ENCODE measurements at regions of chr4 and their contacts with region 1.

Region 1: GRCh38 chr4:142405021-142405694 is 440.9 kb downstream of the INPP4B start:
- DNase-seq: peak; percentile 19 to 66 (median 60)
- ATAC-seq: peak; percentile 72
- H3K4me3 ChIP-seq: peak overlapping the region; percentile 95
- H3K4me3 Mint-ChIP-seq: peak overlapping the region; percentile 92 to 100 (median 99)
- H3K27ac ChIP-seq: peak overlapping the region; percentile 82
- H3K27ac Mint-ChIP-seq: peak overlapping the region; percentile 86 to 100 (median 96)
- H3K4me1 ChIP-seq: peaks cover 26 to 48% of the 10 kb centered on the region in 2 donors
- H3K4me1 Mint-ChIP-seq: peaks cover 22 to 80% (median 69%) of the 10 kb centered on the region in 7 donors
- H3K27me3 ChIP-seq: no peaks in the 10 kb centered on the region
- H3K27me3 Mint-ChIP-seq: no peaks in the 10 kb centered on the region

Region 2: GRCh38 chr4:142282870-142283431 is 122.2 kb before region 1 on chr4:
- CTCF ChIA-PET with region 1: interaction called, 6 read pairs
- POLR2A ChIA-PET with region 1: interaction called, 3 read pairs
- intact Hi-C with region 1: loop called (anchors 5 kb)
- DNase-seq: peak in 7 of 9 donors; percentile 26 to 53 (median 38)
- ATAC-seq: peak; percentile 64
- H3K4me3 ChIP-seq: no peak overlapping the region
- H3K4me3 Mint-ChIP-seq: no peak overlapping the region
- H3K27ac ChIP-seq: no peak overlapping the region
- H3K27ac Mint-ChIP-seq: no peak overlapping the region
- H3K4me1 ChIP-seq: peaks cover 7 to 15% of the 10 kb centered on the region in 2 donors
- H3K4me1 Mint-ChIP-seq: peaks cover 9 to 35% (median 25%) of the 10 kb centered on the region in 7 donors
- H3K27me3 ChIP-seq: no peaks in the 10 kb centered on the region
- H3K27me3 Mint-ChIP-seq: no peaks in the 10 kb centered on the region

Region 3: GRCh38 chr4:142365387-142365786 is 39.8 kb before region 1 on chr4:
- CTCF ChIA-PET with region 1: interaction called, 3 read pairs
- POLR2A ChIA-PET with region 1: interaction called, 6 read pairs
- intact Hi-C with region 1: loop called in 1 of 2 experiments (anchors 2 kb)
- DNase-seq: no peak
- ATAC-seq: no peak
- H3K4me3 ChIP-seq: no peak overlapping the region
- H3K4me3 Mint-ChIP-seq: peak overlapping the region in 6 of 10 donors; percentile 13 to 85 (median 45)
- H3K27ac ChIP-seq: no peak overlapping the region
- H3K27ac Mint-ChIP-seq: peak overlapping the region in 8 of 9 donors; percentile 57 to 92 (median 80)
- H3K4me1 ChIP-seq: peaks cover 34 to 64% of the 10 kb centered on the region in 2 donors
- H3K4me1 Mint-ChIP-seq: peaks cover 46 to 92% (median 79%) of the 10 kb centered on the region in 7 donors
- H3K27me3 ChIP-seq: no peaks in the 10 kb centered on the region
- H3K27me3 Mint-ChIP-seq: no peaks in the 10 kb centered on the region

Region 4: DNA sequence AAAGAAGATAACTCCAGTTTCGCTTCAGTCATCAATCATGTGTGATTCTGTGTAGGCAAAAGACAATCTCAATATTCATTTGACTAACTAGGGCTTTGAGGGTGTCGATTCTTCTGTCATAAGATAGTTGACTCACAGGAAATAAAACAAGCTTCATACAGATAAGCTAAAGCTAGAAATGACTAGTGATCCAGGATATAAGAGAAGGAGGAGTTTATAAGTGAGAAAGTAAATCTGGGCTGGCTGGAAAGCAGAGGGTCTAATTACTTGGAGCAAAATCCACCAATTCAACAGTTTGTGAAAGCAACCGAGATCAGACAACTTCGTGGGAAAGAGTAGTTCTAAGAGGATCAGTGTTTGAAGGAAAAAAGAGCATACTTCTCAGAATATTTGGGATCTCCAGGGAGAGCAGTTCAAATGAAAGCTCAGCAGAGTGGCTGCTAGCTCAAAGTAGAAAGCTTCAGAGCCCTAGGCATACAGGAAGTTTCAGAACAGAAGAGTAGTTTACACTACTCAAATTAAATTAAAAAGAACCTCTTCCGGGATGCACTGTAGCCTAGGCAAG is 11.6 kb after region 1 on chr4:
- CTCF ChIA-PET with region 1: interaction called, 4 read pairs
- POLR2A ChIA-PET with region 1: interaction called, 55 read pairs
- intact Hi-C with region 1: loop called (anchors 1 kb)
- DNase-seq: peak in 7 of 9 donors; percentile 18 to 64 (median 55)
- ATAC-seq: peak; percentile 90
- H3K4me3 ChIP-seq: peak overlapping the region; percentile 50
- H3K4me3 Mint-ChIP-seq: peak overlapping the region; percentile 22 to 90 (median 79)
- H3K27ac ChIP-seq: peak overlapping the region; percentile 64
- H3K27ac Mint-ChIP-seq: peak overlapping the region; percentile 77 to 98 (median 94)
- H3K4me1 ChIP-seq: peaks cover 25 to 37% of the 10 kb centered on the region in 2 donors
- H3K4me1 Mint-ChIP-seq: peaks cover 21 to 75% (median 60%) of the 10 kb centered on the region in 7 donors
- H3K27me3 ChIP-seq: no peaks in the 10 kb centered on the region
- H3K27me3 Mint-ChIP-seq: no peaks in the 10 kb centered on the region

Region 5: DNA sequence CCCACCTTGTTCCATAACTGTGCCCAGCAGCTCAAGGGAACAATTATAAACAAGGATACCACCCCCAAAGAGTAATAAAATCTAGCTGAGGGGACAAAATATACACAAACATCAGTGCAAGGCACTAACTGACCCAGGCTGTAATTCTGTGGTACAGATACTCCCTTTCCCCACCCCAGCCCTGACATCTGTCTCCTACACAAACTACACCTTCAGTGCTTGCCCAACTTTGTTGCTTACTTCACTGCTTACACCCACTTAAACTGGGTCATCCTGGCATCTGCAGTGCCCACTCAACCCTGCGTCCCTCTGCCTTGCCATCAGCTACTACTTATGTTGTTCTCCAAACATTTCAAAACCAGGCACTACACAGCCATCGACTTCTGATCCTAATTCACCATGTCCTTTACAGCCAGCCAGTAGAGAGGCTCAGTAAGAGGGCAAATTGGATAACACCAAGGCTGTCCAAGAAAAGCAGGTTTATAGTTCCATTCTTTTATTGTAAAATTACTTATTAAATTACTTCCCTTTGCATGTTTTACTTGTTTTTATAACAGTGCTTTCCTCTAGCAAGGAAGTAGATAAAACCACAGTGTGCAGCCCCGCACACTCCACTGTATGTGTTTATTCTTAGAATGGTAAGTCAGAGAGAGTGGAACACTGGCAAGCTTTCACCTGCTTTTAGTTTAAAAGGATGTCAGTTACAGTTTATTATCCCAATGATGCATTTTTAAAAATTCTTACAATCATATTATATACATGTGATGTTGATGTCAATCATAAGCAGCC is 291.4 kb after region 1 on chr4:
- CTCF ChIA-PET with region 1: interaction called, 10 read pairs
- POLR2A ChIA-PET with region 1: interaction called, 4 read pairs
- intact Hi-C with region 1: loop called in 1 of 2 experiments (anchors 2 kb)
- DNase-seq: peak in 7 of 9 donors; percentile 25 to 49 (median 44)
- ATAC-seq: peak; percentile 77
- H3K4me3 ChIP-seq: peak overlapping the region; percentile 19
- H3K4me3 Mint-ChIP-seq: peak overlapping the region; percentile 31 to 87 (median 75)
- H3K27ac ChIP-seq: peak overlapping the region; percentile 65
- H3K27ac Mint-ChIP-seq: peak overlapping the region in 8 of 9 donors; percentile 87 to 98 (median 95)
- H3K4me1 ChIP-seq: peaks cover 41 to 64% of the 10 kb centered on the region in 2 donors
- H3K4me1 Mint-ChIP-seq: peaks cover 38 to 88% (median 72%) of the 10 kb centered on the region in 7 donors
- H3K27me3 ChIP-seq: no peaks in the 10 kb centered on the region
- H3K27me3 Mint-ChIP-seq: no peaks in the 10 kb centered on the region

Region 6: GRCh38 chr4:142846729-142847596 is 441.8 kb after region 1 on chr4:
- CTCF ChIA-PET with region 1: no interaction called
- POLR2A ChIA-PET with region 1: no interaction called
- intact Hi-C with region 1: loop called in 1 of 2 experiments (anchors 2 kb)
- DNase-seq: peak; percentile 39 to 81 (median 75)
- ATAC-seq: peak; percentile 89
- H3K4me3 ChIP-seq: peak overlapping the region; percentile 86
- H3K4me3 Mint-ChIP-seq: peak overlapping the region; percentile 85 to 94 (median 92)
- H3K27ac ChIP-seq: peak overlapping the region; percentile 54
- H3K27ac Mint-ChIP-seq: peak overlapping the region in 5 of 9 donors; percentile 26 to 76 (median 56)
- H3K4me1 ChIP-seq: peaks cover 5 to 7% of the 10 kb centered on the region in 2 donors
- H3K4me1 Mint-ChIP-seq: peaks cover 10 to 28% (median 16%) of the 10 kb centered on the region in 7 donors
- H3K27me3 ChIP-seq: peaks cover 0 to 4% of the 10 kb centered on the region in 2 donors
- H3K27me3 Mint-ChIP-seq: peaks cover 5 to 26% (median 22%) of the 10 kb centered on the region in 5 donors